Dendritic cell treated with granulocyte-macrophage colony-stimulating factor and Interleukin-4, amounts not matched to agents 40 ng/mL and 50 ng/mL, for 4 days (primary cell): ENCODE measurements at regions of chr3 and their contacts with region 1.

Region 1: DNA sequence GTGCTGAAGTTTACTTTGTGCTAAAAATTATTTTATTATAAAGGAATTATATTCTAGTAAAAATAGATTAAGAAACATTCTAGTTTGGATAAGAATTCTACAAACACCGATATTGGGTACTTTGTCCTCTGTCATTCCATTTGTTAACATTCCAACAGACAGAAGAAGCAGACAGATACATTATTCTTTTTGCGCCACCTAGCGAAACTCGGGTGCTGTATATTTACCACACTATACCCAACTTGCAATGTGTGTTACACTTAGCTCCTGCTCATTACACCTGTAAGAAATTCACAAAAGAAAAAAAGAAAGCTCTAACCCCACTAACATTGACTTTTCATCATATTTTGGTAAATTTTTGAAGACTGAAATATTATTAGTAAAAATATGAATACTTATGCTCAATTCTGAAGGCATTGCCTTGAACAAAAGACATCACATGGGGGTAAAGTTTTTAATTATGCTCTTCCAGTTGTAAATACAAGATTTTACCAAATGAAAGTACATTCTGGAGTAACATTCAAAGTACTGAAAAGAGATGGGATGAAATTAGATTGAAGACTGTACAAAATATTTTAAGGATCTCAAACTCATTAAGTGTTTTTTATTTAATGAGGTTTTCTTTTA is 136.5 kb upstream of the MLF1 start:
- H3K4me3 Mint-ChIP-seq: no peak overlapping the region
- H3K27ac Mint-ChIP-seq: no peak overlapping the region
- H3K4me1 Mint-ChIP-seq: no peaks in the 10 kb centered on the region
- H3K27me3 Mint-ChIP-seq: no peaks in the 10 kb centered on the region

Region 2: GRCh38 chr3:157618075-157618760 is 816.3 kb before region 1 on chr3:
- intact Hi-C with region 1: loop called (anchors 2 kb)
- H3K4me3 Mint-ChIP-seq: no peak overlapping the region
- H3K27ac Mint-ChIP-seq: no peak overlapping the region
- H3K4me1 Mint-ChIP-seq: no peaks in the 10 kb centered on the region
- H3K27me3 Mint-ChIP-seq: peaks cover 7% of the 10 kb centered on the region

Region 3: DNA sequence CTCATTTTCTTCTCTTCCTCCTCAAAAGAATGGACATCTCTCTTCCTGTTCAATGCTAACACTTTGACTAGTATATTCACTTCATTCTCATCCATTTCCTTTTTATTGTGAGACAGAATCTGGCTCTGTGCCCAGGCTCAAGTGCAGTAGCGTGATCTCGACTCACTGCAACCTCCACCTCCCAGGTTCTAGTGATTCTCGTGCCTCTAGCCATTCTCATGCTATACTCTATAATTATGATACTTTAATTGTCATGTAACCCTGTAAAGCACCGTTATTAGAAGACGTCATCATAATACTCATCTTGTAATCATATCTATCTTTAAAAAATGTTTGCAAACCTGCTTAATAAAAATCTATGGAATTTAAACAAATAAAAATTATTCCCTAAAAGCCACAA is 435.3 kb before region 1 on chr3:
- intact Hi-C with region 1: no loop called
- H3K4me3 Mint-ChIP-seq: no peak overlapping the region
- H3K27ac Mint-ChIP-seq: no peak overlapping the region
- H3K4me1 Mint-ChIP-seq: no peaks in the 10 kb centered on the region
- H3K27me3 Mint-ChIP-seq: no peaks in the 10 kb centered on the region

Region 4: GRCh38 chr3:158091531-158091930 is 343.0 kb before region 1 on chr3:
- intact Hi-C with region 1: loop called (anchors 5 kb)
- H3K4me3 Mint-ChIP-seq: no peak overlapping the region
- H3K27ac Mint-ChIP-seq: no peak overlapping the region
- H3K4me1 Mint-ChIP-seq: peaks cover 20% of the 10 kb centered on the region
- H3K27me3 Mint-ChIP-seq: peaks cover 76% of the 10 kb centered on the region

Region 5: DNA sequence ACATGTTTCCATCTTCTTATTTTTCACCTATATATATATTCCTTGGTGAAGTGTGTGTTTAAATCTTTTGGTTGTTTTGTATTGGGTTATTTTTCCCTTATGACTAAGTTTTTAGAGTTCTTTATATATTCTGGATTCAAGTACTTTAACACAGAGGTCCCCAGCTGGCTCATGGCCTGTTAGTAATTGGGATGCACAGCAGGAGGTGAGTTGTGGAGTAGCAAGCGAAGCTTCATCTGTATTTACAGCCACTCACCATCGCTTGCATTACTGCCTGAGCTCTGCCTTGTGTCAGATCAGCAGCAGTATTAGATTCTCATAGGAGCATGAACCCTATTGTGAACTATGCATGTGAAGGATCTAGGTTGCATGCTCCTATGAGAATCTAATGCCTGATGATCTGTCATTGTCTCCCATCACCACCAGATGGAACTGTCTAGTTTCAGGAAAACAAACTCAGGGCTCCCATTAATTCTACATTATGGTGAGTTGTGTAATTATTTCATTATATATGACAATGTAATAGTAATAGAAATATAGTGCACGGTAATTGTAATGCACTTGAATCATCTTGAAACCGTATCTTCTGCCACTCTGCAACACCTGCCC is 173.1 kb before region 1 on chr3:
- intact Hi-C with region 1: loop called (anchors 2 kb)
- H3K4me3 Mint-ChIP-seq: no peak overlapping the region
- H3K27ac Mint-ChIP-seq: no peak overlapping the region
- H3K4me1 Mint-ChIP-seq: peaks cover 22% of the 10 kb centered on the region
- H3K27me3 Mint-ChIP-seq: no peaks in the 10 kb centered on the region